Dorsolateral prefrontal cortex (tissue), 120 donors: ENCODE measurements at regions of chr3 and their contacts with region 1.

Region 1: GRCh38 chr3:141311496-141312353 is 56.6 kb upstream of the ZBTB38 start:
- DNase-seq: peak; percentile 97 to 99 (median 98)
- H3K4me3 ChIP-seq: peak overlapping the region; percentile 54 to 94 (median 75)
- H3K27ac ChIP-seq: peak overlapping the region; percentile 36 to 95 (median 83)
- H3K27me3 ChIP-seq: no peaks in the 10 kb centered on the region
- CTCF ChIP-seq: peak; percentile 50 to 92 (median 82)

Region 2: GRCh38 chr3:141360888-141361598 is 49.3 kb after region 1 on chr3:
- intact Hi-C with region 1: loop called (anchors 2 to 10 kb)
- DNase-seq: no peak
- H3K4me3 ChIP-seq: peak overlapping the region in 38 of 59 donors; percentile 1 to 53 (median 32)
- H3K27ac ChIP-seq: peak overlapping the region in 49 of 59 donors; percentile 1 to 82 (median 55)
- H3K27me3 ChIP-seq: no peaks in the 10 kb centered on the region
- CTCF ChIP-seq: peak; percentile 47 to 91 (median 83)

Region 3: GRCh38 chr3:142467768-142468167 is 1156.0 kb after region 1 on chr3:
- intact Hi-C with region 1: no loop called
- DNase-seq: no peak
- H3K4me3 ChIP-seq: no peak overlapping the region
- H3K27ac ChIP-seq: no peak overlapping the region
- H3K27me3 ChIP-seq: no peaks in the 10 kb centered on the region
- CTCF ChIP-seq: no peak